ENCODE measurements at regions of chr6 and their contacts with region 1.

Region 1: DNA sequence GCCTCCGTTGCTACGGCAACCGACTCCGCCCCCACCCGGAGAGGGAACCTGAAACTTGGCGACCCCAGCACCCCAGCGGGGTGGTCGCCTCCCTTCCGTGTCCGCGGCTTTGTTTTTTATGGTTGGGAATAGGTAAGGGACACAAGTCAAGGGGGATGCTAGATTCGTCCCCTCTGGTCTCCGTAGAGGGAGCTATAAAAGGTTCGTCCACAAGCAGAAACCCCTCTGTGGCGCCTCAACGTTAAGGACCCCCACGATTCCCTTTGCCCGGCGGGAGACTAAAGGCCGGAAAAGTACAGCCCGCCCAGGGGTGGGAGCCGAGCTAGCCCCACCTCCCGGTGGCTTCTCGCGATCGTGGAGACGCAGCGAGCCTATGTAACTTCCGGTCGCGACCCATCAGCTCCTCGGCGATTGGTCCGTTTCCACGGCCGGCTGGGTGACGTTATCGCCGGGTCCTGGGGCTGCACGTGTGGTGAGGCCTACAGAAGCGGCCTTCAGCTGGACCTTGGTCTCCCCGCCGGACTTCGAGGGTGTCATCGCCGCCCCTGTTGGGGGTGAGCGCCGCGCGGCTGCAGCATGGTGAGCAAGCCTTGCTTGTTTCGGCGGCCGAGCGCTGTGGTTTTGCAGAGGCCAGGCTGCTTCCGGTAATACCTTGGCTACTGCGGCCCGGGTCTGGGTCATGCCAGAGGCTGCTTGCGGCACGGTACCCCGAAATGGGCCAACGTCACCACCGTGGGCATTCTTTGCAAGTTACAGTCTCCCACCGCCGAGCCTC is at the start of gene LTV1:
- DNase-seq: peak; percentile 82 to 96 (median 88)
- ATAC-seq: peak; percentile 95
- H3K4me3 ChIP-seq: peak within 1 kb of the TSS; percentile 90
- H3K4me3 Mint-ChIP-seq: peak within 1 kb of the TSS; percentile 98
- H3K27ac ChIP-seq: peak within 1 kb of the TSS; percentile 88 to 95
- H3K27ac Mint-ChIP-seq: peak within 1 kb of the TSS; percentile 98
- H3K4me1 ChIP-seq: peaks cover 23% of the 10 kb centered on the region
- H3K4me1 Mint-ChIP-seq: peaks cover 36% of the 10 kb centered on the region
- H3K27me3 ChIP-seq: no peaks in the 10 kb centered on the region
- H3K27me3 Mint-ChIP-seq: no peaks in the 10 kb centered on the region
- CTCF ChIP-seq: no peak
- total RNA-seq, gene LTV1: 27.0 to 28.5 TPM

Region 2: DNA sequence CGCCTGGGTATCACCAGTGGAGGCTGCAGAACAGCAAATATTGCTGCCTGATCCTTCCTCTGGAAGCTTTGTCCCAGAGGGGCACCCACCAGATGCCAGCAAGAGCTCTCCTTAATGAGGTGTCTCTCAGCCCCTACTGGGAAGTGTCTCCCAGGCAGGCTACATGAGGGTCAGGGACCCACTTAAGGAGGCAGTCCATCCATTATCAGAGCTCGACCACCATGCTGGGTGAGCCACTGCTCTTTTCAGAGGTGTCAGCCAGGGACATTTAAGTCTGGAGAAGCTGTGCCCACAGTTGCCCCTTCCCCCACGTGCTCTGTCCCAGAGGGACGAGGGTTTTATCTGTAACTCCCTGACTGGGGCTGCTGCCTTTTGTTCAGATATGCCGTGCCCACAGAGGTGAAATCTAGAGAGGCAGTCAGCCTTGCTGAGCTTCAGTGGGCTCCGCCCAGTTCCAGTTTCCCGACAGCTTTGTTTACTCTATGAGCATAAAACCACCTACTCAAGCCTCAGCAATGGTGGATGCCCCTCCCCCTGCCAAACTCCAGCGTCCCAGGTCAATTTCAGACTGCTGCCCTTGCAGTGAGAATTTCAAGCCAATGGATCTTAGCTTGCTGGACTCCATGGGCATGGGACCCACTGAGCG is 808.3 kb before region 1 on chr6:
- CTCF ChIA-PET with region 1: no interaction called
- POLR2A ChIA-PET with region 1: no interaction called
- intact Hi-C with region 1: no loop called
- DNase-seq: no peak
- ATAC-seq: no peak
- H3K4me3 ChIP-seq: no peak overlapping the region
- H3K4me3 Mint-ChIP-seq: no peak overlapping the region
- H3K27ac ChIP-seq: no peak overlapping the region
- H3K27ac Mint-ChIP-seq: no peak overlapping the region
- H3K4me1 ChIP-seq: peaks cover 4% of the 10 kb centered on the region
- H3K4me1 Mint-ChIP-seq: no peaks in the 10 kb centered on the region
- H3K27me3 ChIP-seq: no peaks in the 10 kb centered on the region
- H3K27me3 Mint-ChIP-seq: no peaks in the 10 kb centered on the region
- CTCF ChIP-seq: no peak

Region 3: DNA sequence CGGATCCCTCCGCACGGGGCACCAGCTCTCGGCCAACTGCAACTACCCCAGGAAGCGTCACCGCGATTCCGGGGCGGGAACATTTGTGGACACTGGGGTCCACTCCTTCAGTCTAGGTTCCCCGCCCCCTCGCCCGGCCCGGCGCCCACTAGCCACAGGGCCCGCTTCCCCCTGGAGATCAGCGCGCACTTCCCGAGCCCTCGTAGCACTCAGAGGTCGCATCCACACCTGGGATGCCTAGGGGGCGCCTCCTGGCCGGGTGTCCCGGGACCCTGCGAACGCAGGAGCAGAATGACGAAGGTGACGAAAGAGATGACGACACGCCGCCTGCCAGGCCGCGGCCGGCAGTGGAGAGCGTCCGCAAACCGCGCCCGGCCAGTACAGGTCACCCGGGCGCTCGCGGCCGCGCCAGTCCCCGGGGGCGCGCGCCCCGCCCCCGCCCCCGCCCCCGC is 782.7 kb before region 1 on chr6:
- CTCF ChIA-PET with region 1: no interaction called
- POLR2A ChIA-PET with region 1: no interaction called
- intact Hi-C with region 1: loop called in 1 of 2 experiments (anchors 5 kb)
- DNase-seq: peak; percentile 50 to 90 (median 68)
- ATAC-seq: peak; percentile 60
- H3K4me3 ChIP-seq: peak overlapping the region; percentile 94
- H3K4me3 Mint-ChIP-seq: peak overlapping the region; percentile 98
- H3K27ac ChIP-seq: peak overlapping the region; percentile 60 to 81
- H3K27ac Mint-ChIP-seq: peak overlapping the region; percentile 98
- H3K4me1 ChIP-seq: peaks cover 19% of the 10 kb centered on the region
- H3K4me1 Mint-ChIP-seq: peaks cover 28% of the 10 kb centered on the region
- H3K27me3 ChIP-seq: no peaks in the 10 kb centered on the region
- H3K27me3 Mint-ChIP-seq: no peaks in the 10 kb centered on the region
- CTCF ChIP-seq: peak; percentile 42

Region 4: GRCh38 chr6:143450453-143451371 is 392.4 kb before region 1 on chr6 and contains the starts of genes ADAT2 and PEX3:
- CTCF ChIA-PET with region 1: interaction called, 4 read pairs
- POLR2A ChIA-PET with region 1: interaction called, 18 read pairs
- intact Hi-C with region 1: loop called (anchors 5 kb)
- DNase-seq: peak; percentile 85 to 97 (median 90)
- ATAC-seq: peak; percentile 90
- H3K4me3 ChIP-seq: peak within 1 kb of the TSS; percentile 72
- H3K4me3 Mint-ChIP-seq: peak within 1 kb of the TSS; percentile 99
- H3K27ac ChIP-seq: peak within 1 kb of the TSS; percentile 72 to 78
- H3K27ac Mint-ChIP-seq: peak within 1 kb of the TSS; percentile 94
- H3K4me1 ChIP-seq: peaks cover 15% of the 10 kb centered on the region
- H3K4me1 Mint-ChIP-seq: peaks cover 60% of the 10 kb centered on the region
- H3K27me3 ChIP-seq: no peaks in the 10 kb centered on the region
- H3K27me3 Mint-ChIP-seq: no peaks in the 10 kb centered on the region
- CTCF ChIP-seq: no peak
- total RNA-seq, gene ADAT2: 14.6 to 17.4 TPM
- total RNA-seq, gene PEX3: 7.3 to 9.7 TPM

Region 5: GRCh38 chr6:143542888-143543287 is 300.2 kb before region 1 on chr6:
- CTCF ChIA-PET with region 1: no interaction called
- POLR2A ChIA-PET with region 1: interaction called, 4 read pairs
- intact Hi-C with region 1: loop called in 1 of 2 experiments (anchors 5 kb)
- DNase-seq: peak in 1 of 14 experiments; percentile 32
- ATAC-seq: peak; percentile 28
- H3K4me3 ChIP-seq: no peak overlapping the region
- H3K4me3 Mint-ChIP-seq: peak overlapping the region; percentile 2
- H3K27ac ChIP-seq: no peak overlapping the region
- H3K27ac Mint-ChIP-seq: peak overlapping the region; percentile 95
- H3K4me1 ChIP-seq: peaks cover 72% of the 10 kb centered on the region
- H3K4me1 Mint-ChIP-seq: peaks cover 85% of the 10 kb centered on the region
- H3K27me3 ChIP-seq: no peaks in the 10 kb centered on the region
- H3K27me3 Mint-ChIP-seq: no peaks in the 10 kb centered on the region
- CTCF ChIP-seq: no peak

Region 6: GRCh38 chr6:143884216-143884900 is 41.3 kb after region 1 on chr6:
- CTCF ChIA-PET with region 1: no interaction called
- POLR2A ChIA-PET with region 1: no interaction called
- intact Hi-C with region 1: no loop called
- DNase-seq: no peak
- ATAC-seq: no peak
- H3K4me3 ChIP-seq: no peak overlapping the region
- H3K4me3 Mint-ChIP-seq: no peak overlapping the region
- H3K27ac ChIP-seq: no peak overlapping the region
- H3K27ac Mint-ChIP-seq: no peak overlapping the region
- H3K4me1 ChIP-seq: no peaks in the 10 kb centered on the region
- H3K4me1 Mint-ChIP-seq: no peaks in the 10 kb centered on the region
- H3K27me3 ChIP-seq: no peaks in the 10 kb centered on the region
- H3K27me3 Mint-ChIP-seq: no peaks in the 10 kb centered on the region
- CTCF ChIP-seq: no peak

Region 7: DNA sequence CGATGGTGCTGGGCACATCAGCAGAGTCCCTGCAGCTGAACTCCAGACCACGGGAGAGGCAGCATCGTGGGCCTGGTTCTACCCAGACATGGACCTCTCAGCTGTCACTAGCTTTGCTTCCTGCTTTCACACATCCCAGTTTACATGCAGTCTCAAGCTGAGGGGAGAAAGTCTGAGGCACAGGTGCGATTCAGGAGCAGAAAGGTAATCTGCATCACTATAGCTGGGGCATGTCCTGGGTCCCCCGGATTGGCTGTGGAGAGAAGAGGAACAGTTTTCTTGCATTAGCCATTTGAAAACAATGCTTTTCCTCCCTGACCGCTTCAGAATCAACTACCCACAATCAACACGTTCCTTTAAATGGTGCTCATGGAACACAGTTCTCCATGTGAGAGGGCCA is 105.1 kb after region 1 on chr6:
- CTCF ChIA-PET with region 1: no interaction called
- POLR2A ChIA-PET with region 1: no interaction called
- intact Hi-C with region 1: no loop called
- DNase-seq: no peak
- ATAC-seq: no peak
- H3K4me3 ChIP-seq: no peak overlapping the region
- H3K4me3 Mint-ChIP-seq: no peak overlapping the region
- H3K27ac ChIP-seq: no peak overlapping the region
- H3K27ac Mint-ChIP-seq: no peak overlapping the region
- H3K4me1 ChIP-seq: no peaks in the 10 kb centered on the region
- H3K4me1 Mint-ChIP-seq: no peaks in the 10 kb centered on the region
- H3K27me3 ChIP-seq: no peaks in the 10 kb centered on the region
- H3K27me3 Mint-ChIP-seq: no peaks in the 10 kb centered on the region
- CTCF ChIP-seq: no peak

Region 8: DNA sequence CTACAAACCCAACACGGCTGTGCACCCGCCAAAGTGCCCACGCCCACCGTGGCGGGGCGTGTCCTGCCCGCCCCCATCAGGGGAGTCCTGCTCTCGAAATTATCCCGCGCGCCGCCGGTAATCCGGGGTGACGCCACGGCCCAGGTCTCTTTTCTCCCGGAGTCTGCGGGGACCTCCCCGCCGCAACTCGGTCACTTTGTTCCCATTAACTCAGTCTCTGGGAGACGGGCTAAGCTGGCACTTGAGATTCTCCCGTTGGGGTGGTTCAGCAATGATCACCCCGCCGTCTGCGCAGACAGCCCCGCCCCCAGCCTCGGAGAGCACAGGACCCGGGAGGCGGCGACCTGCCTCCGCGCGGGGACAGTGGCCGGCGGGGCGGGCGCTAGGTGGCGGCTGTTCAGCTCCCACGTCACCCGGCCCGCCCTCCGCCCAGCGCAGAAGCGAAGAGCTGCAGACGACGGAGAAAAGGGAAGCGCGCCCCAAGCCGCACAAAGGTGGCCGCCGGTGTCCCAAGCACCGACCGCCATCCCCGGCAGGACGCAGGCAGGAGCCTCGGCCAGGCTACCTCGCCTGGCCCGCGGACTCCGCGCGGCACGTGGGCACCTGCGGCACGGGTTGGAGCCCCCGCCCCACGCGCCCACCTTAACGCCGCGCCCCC is 220.8 kb after region 1 on chr6:
- CTCF ChIA-PET with region 1: no interaction called
- POLR2A ChIA-PET with region 1: interaction called, 10 read pairs
- intact Hi-C with region 1: loop called in 1 of 2 experiments (anchors 5 kb)
- DNase-seq: peak; percentile 84 to 96 (median 91)
- ATAC-seq: peak; percentile 90
- H3K4me3 ChIP-seq: peak overlapping the region; percentile 73
- H3K4me3 Mint-ChIP-seq: peak overlapping the region; percentile 95
- H3K27ac ChIP-seq: peak overlapping the region; percentile 75 to 90
- H3K27ac Mint-ChIP-seq: peak overlapping the region; percentile 95
- H3K4me1 ChIP-seq: peaks cover 20% of the 10 kb centered on the region
- H3K4me1 Mint-ChIP-seq: peaks cover 31% of the 10 kb centered on the region
- H3K27me3 ChIP-seq: no peaks in the 10 kb centered on the region
- H3K27me3 Mint-ChIP-seq: no peaks in the 10 kb centered on the region
- CTCF ChIP-seq: peak; percentile 41

Measured in CD4-positive, alpha-beta T cell (primary cell).